SK-N-SH (cell line): ENCODE measurements at regions of chr22 and their contacts with region 1.

Region 1: GRCh38 chr22:30289134-30289979 is at the start of gene CASTOR1:
- DNase-seq: peak; percentile 99
- H3K4me3 ChIP-seq: peak within 1 kb of the TSS; percentile 83 to 84
- H3K27ac ChIP-seq: peak within 1 kb of the TSS; percentile 53 to 74
- H3K4me1 ChIP-seq: peaks cover 16 to 30% of the 10 kb centered on the region in 2 experiments; a peak in 2 of 4 replicates
- H3K27me3 ChIP-seq: no peaks in the 10 kb centered on the region
- CTCF ChIP-seq: no peak
- EP300 ChIP-seq: no peak
- RAD21 ChIP-seq: no peak
- polyA plus RNA-seq, gene CASTOR1: 14.4 and 17.4 TPM in 2 replicates

Region 2: GRCh38 chr22:30116362-30117117 is 172.8 kb before region 1 on chr22:
- CTCF ChIA-PET with region 1: interaction called, 15 read pairs
- POLR2A ChIA-PET with region 1: no interaction called
- DNase-seq: no peak
- H3K4me3 ChIP-seq: no peak overlapping the region
- H3K27ac ChIP-seq: no peak overlapping the region
- H3K4me1 ChIP-seq: no peaks in the 10 kb centered on the region; a peak in 2 of 4 replicates
- H3K27me3 ChIP-seq: no peaks in the 10 kb centered on the region
- CTCF ChIP-seq: no peak
- EP300 ChIP-seq: no peak
- RAD21 ChIP-seq: no peak

Region 3: DNA sequence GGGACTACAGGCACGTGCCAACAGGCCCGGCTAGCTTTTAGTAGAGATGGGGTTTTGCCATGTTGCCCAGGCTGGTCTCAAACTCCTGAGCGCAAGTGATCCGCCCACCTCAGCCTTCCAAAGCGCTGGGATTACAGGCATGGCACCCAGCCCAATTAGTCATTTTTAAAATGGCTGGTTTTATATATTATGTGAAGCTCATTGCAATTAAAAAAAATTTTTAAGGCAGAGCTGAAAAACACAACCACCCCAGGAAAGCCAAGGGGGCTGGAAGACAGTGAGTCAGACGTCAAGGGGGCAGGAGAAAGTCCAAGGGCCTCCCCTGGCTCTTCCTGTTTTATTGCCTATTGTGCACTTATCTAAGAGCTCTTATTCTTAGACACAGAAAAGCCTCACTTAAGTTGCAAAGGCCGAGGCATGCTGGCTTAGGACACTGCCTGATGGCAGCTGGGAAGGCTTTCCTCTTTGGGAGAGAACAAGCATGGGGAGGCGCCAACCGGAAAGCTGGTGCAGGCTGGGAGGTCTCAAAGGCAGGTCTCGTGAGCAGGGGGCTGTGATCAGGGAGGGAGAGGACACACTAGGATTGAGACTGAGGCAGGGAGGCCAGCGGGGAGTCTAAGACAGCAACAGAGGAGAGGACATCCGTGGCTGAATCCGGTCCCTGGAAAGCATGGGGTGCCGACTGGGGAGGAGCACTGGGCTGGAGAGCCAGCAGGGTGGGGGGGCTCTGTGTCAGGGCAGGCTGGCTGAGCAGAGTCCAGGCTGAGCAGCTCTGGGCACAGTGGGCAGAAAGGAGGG is 11.6 kb before region 1 on chr22:
- CTCF ChIA-PET with region 1: interaction called, 23 read pairs
- POLR2A ChIA-PET with region 1: no interaction called
- DNase-seq: no peak
- H3K4me3 ChIP-seq: no peak overlapping the region
- H3K27ac ChIP-seq: peak overlapping the region in 1 of 2 experiments; percentile 70; a peak in 2 of 4 replicates
- H3K4me1 ChIP-seq: peaks cover 0 to 14% of the 10 kb centered on the region in 2 experiments; a peak in 2 of 4 replicates
- H3K27me3 ChIP-seq: no peaks in the 10 kb centered on the region
- CTCF ChIP-seq: no peak
- EP300 ChIP-seq: no peak
- RAD21 ChIP-seq: no peak

Region 4: GRCh38 chr22:30326706-30327362 is 37.5 kb after region 1 on chr22 and contains the start of gene TBC1D10A:
- CTCF ChIA-PET with region 1: interaction called, 42 read pairs
- POLR2A ChIA-PET with region 1: interaction called, 4 read pairs
- DNase-seq: peak; percentile 100
- H3K4me3 ChIP-seq: peak within 1 kb of the TSS; percentile 72 to 79
- H3K27ac ChIP-seq: peak within 1 kb of the TSS; percentile 44 to 48; a peak in 3 of 4 replicates
- H3K4me1 ChIP-seq: peaks cover 0 to 25% of the 10 kb centered on the region in 2 experiments; a peak in 2 of 4 replicates
- H3K27me3 ChIP-seq: no peaks in the 10 kb centered on the region
- CTCF ChIP-seq: no peak
- EP300 ChIP-seq: no peak
- RAD21 ChIP-seq: no peak
- polyA plus RNA-seq, gene TBC1D10A: 15.3 and 16.5 TPM in 2 replicates

Region 5: DNA sequence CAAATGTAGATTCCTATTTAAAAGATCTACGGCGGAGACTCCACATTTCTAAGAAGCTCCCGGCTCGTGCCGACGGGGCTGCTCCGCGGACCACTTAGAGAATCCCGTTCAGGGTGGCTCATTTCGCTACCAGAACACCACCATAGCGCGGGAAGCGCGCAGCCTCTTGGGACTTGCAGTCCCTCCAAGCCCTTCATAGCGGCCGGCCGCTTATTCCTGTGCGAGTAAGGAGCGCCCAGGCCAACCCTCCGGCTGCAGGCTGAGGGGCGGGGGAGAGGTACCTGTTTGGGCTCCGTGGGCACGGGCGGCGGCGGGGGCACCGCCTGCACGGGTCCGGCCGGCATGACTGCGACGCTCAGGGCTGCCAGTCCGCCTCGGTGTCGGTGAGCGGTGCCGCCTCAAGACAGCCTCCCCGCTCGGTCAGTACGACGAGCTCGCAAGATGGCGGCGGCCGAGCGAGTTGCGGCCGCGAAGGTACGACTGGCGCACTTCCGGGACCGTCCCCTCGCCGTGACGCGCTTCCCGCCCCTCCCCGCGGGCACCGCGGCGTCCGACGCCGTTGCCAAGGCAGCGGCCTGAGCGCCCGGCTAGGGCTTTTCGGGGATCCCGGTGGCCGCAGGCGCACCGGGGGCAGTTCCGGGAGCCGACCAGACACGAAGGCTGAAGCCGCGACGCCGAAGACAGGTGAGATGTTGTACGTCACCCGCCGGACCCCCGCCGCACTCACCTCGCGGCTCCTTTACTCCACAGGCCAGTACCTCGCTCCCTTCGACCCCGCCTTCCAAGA is 67.3 kb after region 1 on chr22 and contains the starts of genes CCDC157 and SF3A1:
- CTCF ChIA-PET with region 1: interaction called, 15 read pairs
- POLR2A ChIA-PET with region 1: interaction called, 7 read pairs
- DNase-seq: peak; percentile 96
- H3K4me3 ChIP-seq: peak within 1 kb of the TSS; percentile 79 to 95
- H3K27ac ChIP-seq: peak within 1 kb of the TSS; percentile 93 to 95
- H3K4me1 ChIP-seq: peaks cover 12 to 14% of the 10 kb centered on the region in 2 experiments; a peak in 2 of 4 replicates
- H3K27me3 ChIP-seq: no peaks in the 10 kb centered on the region
- CTCF ChIP-seq: no peak
- EP300 ChIP-seq: no peak
- RAD21 ChIP-seq: no peak
- polyA plus RNA-seq, gene CCDC157: 5.8 and 7.9 TPM in 2 replicates
- polyA plus RNA-seq, gene SF3A1: 37.5 and 75.2 TPM in 2 replicates